Activated CD8-positive, alpha-beta T cell treated with anti-CD3 and anti-CD28 coated beads for 36 hours (primary cell): ENCODE measurements at regions of chr17 and their contacts with region 1.

Region 1: GRCh38 chr17:32877164-32877764 is 340 bp upstream of the MYO1D start:
- DNase-seq: peak; percentile 90
- ATAC-seq: peak; percentile 98
- H3K4me3 Mint-ChIP-seq: peak overlapping the region; percentile 63
- H3K27ac Mint-ChIP-seq: peak overlapping the region; percentile 75
- H3K4me1 Mint-ChIP-seq: peaks cover 15% of the 10 kb centered on the region
- H3K27me3 Mint-ChIP-seq: peaks cover 2% of the 10 kb centered on the region
- CTCF ChIP-seq: peak; percentile 59

Region 2: GRCh38 chr17:32461853-32462617 is 415.2 kb before region 1 on chr17:
- CTCF ChIA-PET with region 1: interaction called, 12 read pairs
- POLR2A ChIA-PET with region 1: no interaction called
- intact Hi-C with region 1: no loop called
- DNase-seq: peak; percentile 85
- ATAC-seq: peak; percentile 69
- H3K4me3 Mint-ChIP-seq: no peak overlapping the region
- H3K27ac Mint-ChIP-seq: peak overlapping the region; percentile 50
- H3K4me1 Mint-ChIP-seq: peaks cover 35% of the 10 kb centered on the region
- H3K27me3 Mint-ChIP-seq: no peaks in the 10 kb centered on the region
- CTCF ChIP-seq: peak; percentile 62

Region 3: DNA sequence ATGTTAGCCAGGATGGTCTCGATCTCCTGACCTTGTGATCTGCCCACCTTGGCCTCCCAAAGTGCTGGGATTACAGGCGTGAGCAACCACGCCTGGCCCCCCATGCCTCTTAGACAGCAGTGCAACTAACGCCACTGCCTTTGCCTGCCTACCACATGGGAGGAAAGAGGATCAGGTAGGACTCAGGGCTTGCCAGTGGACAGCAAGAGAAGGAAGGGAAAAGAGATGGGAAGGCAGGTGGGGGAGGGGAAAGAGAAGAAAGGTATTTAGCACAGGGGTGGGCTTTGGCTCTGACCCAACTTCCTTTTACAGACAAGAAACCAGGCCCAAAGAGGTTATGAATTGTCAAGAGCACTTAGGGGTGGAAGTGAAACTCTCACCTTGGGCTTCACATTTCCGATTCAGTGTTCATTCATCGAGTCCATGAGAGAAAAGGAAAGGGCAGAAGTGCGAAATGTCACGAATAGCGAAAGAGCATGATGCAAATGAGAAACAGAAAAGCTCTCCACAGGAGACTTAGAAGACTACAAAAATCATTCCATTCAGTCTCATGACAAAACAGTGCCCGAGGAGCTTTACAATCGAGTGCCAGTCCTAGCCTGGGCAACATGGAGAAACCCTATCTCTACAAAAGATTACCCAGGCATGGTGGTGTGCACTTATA is 354.1 kb before region 1 on chr17:
- CTCF ChIA-PET with region 1: no interaction called
- POLR2A ChIA-PET with region 1: no interaction called
- intact Hi-C with region 1: no loop called
- DNase-seq: peak; percentile 84
- ATAC-seq: peak; percentile 53
- H3K4me3 Mint-ChIP-seq: peak overlapping the region; percentile 55
- H3K27ac Mint-ChIP-seq: peak overlapping the region; percentile 98
- H3K4me1 Mint-ChIP-seq: peaks cover 63% of the 10 kb centered on the region
- H3K27me3 Mint-ChIP-seq: peaks cover 6% of the 10 kb centered on the region
- CTCF ChIP-seq: no peak

Region 4: DNA sequence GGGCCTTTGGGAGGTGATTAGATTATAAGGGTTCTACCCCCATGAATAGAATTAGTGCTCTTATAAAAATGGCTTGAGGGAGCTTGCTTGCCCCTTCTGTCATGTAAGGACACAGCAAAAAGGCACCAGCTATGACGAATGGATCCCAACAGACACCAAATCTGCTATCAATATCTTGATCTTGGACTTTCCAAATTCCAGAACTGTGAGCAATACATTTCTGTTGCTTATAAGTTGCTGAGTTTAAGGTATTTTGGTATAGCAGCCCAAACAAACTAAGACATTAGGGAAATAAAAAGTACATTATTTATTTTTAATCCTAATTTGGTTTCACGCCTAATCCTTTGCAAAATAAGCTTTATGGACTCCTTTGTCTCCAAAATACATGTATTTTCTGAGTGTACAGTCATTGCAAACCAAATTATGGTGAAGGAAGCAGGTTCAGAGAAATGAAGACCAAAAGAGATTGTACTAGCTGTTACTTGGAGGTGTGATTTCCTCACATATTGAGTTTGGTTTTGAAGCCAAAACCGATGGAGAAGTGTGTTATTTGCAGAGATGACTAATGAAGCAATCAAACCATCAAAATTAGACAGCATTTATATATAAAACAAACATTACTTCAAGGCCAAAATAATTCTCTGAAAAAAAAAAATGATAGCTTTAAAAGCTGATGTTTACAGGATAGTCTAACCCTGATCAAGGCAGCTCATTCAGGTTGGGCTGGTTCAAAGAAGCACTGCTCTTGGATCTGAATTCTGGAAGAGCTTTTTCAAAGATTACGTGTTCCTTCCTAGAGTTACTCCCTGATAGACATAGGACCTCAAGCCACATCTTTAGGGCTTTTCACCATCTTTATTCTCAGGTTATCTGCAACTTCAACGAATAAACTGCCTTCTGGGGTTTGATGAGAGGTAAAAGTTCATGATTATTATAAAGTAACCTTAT is 72.0 kb before region 1 on chr17:
- CTCF ChIA-PET with region 1: interaction called, 13 read pairs
- POLR2A ChIA-PET with region 1: no interaction called
- intact Hi-C with region 1: no loop called
- DNase-seq: no peak
- ATAC-seq: no peak
- H3K4me3 Mint-ChIP-seq: no peak overlapping the region
- H3K27ac Mint-ChIP-seq: no peak overlapping the region
- H3K4me1 Mint-ChIP-seq: peaks cover 4% of the 10 kb centered on the region
- H3K27me3 Mint-ChIP-seq: peaks cover 4% of the 10 kb centered on the region
- CTCF ChIP-seq: no peak

Region 5: DNA sequence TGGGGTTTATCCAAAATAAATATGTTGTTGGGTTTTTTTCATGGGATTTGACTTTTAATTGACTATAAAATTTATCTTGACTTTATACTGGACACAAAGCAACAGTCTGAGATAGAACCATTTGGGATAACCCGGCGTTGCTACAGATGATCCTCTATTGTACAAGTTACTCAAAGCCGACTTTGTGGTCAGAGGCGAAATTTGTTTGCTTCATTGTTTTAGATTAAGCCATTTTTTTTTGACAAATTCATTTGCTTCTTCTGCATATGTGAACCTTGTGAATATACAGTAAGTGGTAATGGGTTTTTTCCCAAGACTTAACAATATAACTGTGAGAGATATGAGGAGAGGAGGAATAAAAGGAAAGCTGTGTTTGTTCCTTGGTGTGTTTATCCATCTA is 12.1 kb before region 1 on chr17:
- CTCF ChIA-PET with region 1: interaction called, 22 read pairs
- POLR2A ChIA-PET with region 1: interaction called, 3 read pairs
- intact Hi-C with region 1: no loop called
- DNase-seq: no peak
- ATAC-seq: no peak
- H3K4me3 Mint-ChIP-seq: no peak overlapping the region
- H3K27ac Mint-ChIP-seq: no peak overlapping the region
- H3K4me1 Mint-ChIP-seq: peaks cover 7% of the 10 kb centered on the region
- H3K27me3 Mint-ChIP-seq: peaks cover 2% of the 10 kb centered on the region
- CTCF ChIP-seq: no peak

Region 6: DNA sequence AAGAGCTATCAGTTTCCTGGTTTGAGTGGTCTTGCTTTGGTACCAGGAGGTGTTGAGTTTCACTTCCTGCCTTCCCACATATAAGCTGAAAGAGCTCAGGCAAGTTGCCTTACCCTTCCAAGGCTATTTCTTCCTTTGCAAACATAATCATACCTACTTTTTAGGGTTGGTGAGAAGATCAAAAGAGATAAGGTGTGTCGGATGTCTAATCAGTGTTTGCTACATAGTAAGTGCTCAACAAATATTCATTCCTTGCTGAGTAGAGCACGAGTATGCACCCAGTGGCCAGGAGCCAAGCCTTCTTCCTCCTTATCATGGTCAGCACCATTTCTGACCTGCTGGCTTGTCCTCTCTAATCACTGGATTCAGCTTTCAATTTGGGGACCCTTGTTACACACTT is 38.0 kb after region 1 on chr17:
- CTCF ChIA-PET with region 1: interaction called, 21 read pairs
- POLR2A ChIA-PET with region 1: no interaction called
- intact Hi-C with region 1: no loop called
- DNase-seq: no peak
- ATAC-seq: no peak
- H3K4me3 Mint-ChIP-seq: no peak overlapping the region
- H3K27ac Mint-ChIP-seq: no peak overlapping the region
- H3K4me1 Mint-ChIP-seq: peaks cover 29% of the 10 kb centered on the region
- H3K27me3 Mint-ChIP-seq: peaks cover 3% of the 10 kb centered on the region
- CTCF ChIP-seq: no peak